ENCODE measurements at regions of chr12 and their contacts with region 1.

Region 1: DNA sequence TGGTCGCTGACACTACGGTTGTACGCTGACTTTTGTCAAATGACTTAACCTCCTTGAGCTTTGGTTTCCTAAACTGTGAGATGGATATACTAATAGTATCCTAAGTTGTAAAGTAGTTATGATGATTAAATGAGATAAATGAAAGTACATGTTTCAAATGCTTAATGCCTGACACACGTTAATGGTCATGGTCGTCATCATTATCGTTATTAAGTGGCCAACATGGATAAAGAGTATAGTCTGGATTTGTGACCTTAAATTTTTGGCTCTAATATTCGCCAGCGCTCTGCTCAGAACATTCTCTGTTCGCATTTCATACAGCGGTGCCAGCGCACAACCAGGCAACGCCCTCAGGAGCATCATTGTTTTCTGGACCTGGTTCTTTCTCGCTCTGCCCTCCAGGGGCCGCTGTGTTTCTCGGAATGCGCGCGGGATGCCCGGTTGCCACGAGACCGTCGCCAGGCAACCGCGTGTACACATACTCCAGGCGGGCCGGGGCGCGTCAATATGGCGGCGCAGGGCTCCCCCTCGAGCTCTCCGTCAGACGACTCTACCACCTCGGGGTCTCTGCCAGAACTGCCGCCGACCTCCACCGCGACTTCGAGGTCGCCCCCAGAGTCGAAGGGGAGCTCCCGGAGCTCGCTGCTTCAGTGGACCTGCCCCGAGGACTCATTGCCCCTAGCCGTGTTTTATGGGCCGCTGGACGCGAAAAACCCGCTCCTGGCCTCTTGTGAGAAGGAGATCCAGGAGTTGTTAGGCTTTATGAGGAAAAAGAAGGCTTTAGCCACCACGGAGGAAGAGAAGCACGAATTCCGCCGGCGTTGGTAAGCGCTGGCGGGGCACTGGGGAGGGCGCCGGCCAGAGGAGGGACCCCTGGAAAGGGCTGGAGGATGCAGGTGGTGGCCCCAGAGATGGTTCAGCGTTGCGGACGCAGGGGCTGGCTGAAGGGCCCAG is at the start of gene CFAP54:
- DNase-seq: peak; percentile 96
- H3K4me3 Mint-ChIP-seq: peak within 1 kb of the TSS; percentile 85
- H3K27ac Mint-ChIP-seq: no peak within 1 kb of the TSS
- H3K4me1 Mint-ChIP-seq: peaks cover 24% of the 10 kb centered on the region
- H3K27me3 Mint-ChIP-seq: no peaks in the 10 kb centered on the region
- total RNA-seq, gene CFAP54: 0.38 to 0.64 TPM

Region 2: GRCh38 chr12:95858479-95859343 is 630.7 kb before region 1 on chr12 and contains the start of gene SNRPF:
- CTCF ChIA-PET with region 1: no interaction called
- intact Hi-C with region 1: loop called (anchors 10 kb)
- DNase-seq: peak; percentile 97
- H3K4me3 Mint-ChIP-seq: no peak within 1 kb of the TSS
- H3K27ac Mint-ChIP-seq: no peak within 1 kb of the TSS
- H3K4me1 Mint-ChIP-seq: peaks cover 25% of the 10 kb centered on the region
- H3K27me3 Mint-ChIP-seq: peaks cover 3% of the 10 kb centered on the region
- total RNA-seq, gene SNRPF: 57.4 to 59.9 TPM

Region 3: GRCh38 chr12:96421014-96421413 is 68.4 kb before region 1 on chr12:
- CTCF ChIA-PET with region 1: interaction called, 6 read pairs
- intact Hi-C with region 1: loop called (anchors 1 kb)
- DNase-seq: peak; percentile 44
- H3K4me3 Mint-ChIP-seq: peak overlapping the region; percentile 75
- H3K27ac Mint-ChIP-seq: peak overlapping the region; percentile 74
- H3K4me1 Mint-ChIP-seq: peaks cover 38% of the 10 kb centered on the region
- H3K27me3 Mint-ChIP-seq: no peaks in the 10 kb centered on the region

Region 4: GRCh38 chr12:96434107-96434506 is 55.3 kb before region 1 on chr12:
- CTCF ChIA-PET with region 1: interaction called, 5 read pairs
- intact Hi-C with region 1: loop called (anchors 1 kb)
- DNase-seq: peak; percentile 91
- H3K4me3 Mint-ChIP-seq: no peak overlapping the region
- H3K27ac Mint-ChIP-seq: peak overlapping the region; percentile 48
- H3K4me1 Mint-ChIP-seq: peaks cover 17% of the 10 kb centered on the region
- H3K27me3 Mint-ChIP-seq: no peaks in the 10 kb centered on the region

Region 5: DNA sequence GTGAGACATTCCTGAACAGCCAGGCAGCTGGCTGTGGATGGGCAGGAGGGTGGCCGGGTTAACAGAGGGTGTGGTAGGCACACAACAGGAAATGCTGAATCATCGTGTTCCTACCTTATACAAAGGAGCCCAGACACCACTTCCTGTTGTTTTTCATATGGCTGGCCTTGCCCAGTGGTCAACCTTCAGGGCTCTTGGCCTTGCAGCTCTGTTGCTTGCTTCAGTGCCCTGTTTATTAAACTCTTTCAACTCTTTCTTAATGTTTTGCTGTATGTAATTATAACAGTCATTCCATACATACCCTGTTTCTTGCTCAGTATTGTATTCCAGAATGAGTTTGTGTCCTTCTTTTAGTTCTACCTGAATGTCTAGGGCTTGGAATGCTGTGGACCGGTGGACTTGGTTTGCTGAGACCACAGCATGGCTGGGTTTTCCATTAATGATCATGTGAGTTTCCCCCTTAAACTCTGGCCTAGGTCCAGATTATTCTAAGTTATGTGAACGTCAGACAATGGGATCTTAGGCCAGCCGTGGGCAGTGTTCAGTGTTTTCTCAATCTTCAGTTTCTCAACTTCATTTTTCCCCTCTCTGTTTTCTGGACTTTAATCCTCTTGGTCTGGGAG is 11.9 kb after region 1 on chr12:
- CTCF ChIA-PET with region 1: interaction called, 11 read pairs
- intact Hi-C with region 1: loop called (anchors 1 kb)
- DNase-seq: peak; percentile 44
- H3K4me3 Mint-ChIP-seq: no peak overlapping the region
- H3K27ac Mint-ChIP-seq: peak overlapping the region; percentile 74
- H3K4me1 Mint-ChIP-seq: peaks cover 31% of the 10 kb centered on the region
- H3K27me3 Mint-ChIP-seq: no peaks in the 10 kb centered on the region

Region 6: DNA sequence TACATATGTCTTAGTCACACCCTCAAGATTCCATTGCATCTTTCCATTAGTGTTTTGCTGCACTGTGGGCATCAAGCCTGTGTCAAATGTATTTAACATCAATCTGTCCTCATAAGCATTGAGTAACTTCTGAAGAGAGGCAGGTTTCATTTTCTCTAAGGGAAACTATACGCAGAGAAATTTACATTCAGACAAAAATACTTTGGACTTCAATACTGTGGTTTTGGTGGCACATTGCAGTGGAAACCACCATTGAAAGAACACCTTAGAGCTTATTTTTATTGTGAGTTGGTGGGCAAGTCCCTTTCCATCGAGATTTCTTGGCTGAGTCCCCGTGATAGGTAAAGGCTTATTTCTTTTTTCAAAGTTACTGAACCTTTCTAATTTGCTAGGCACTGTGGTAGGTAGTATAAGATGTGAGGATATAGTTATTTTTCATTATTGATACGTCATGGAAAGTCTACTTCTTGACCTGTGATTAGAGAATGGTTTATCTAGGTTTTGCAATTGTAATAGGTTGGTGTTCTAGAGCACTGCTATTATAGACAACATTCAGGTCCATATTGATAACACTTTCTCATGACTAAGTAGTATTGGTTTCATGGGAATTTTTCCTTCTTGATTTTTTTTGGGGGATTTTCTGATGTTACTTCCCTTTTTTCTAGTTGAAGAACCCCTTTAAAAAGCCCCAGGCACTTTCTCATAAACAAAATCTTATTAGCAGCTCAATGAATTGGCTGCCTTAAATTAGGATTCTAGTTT is 81.9 kb after region 1 on chr12:
- CTCF ChIA-PET with region 1: interaction called, 3 read pairs
- intact Hi-C with region 1: loop called (anchors 1 kb)
- DNase-seq: peak; percentile 58
- H3K4me3 Mint-ChIP-seq: peak overlapping the region; percentile 27
- H3K27ac Mint-ChIP-seq: peak overlapping the region; percentile 15
- H3K4me1 Mint-ChIP-seq: peaks cover 27% of the 10 kb centered on the region
- H3K27me3 Mint-ChIP-seq: peaks cover 7% of the 10 kb centered on the region